ENCODE measurements at regions of chr3 and their contacts with region 1.

Region 1: DNA sequence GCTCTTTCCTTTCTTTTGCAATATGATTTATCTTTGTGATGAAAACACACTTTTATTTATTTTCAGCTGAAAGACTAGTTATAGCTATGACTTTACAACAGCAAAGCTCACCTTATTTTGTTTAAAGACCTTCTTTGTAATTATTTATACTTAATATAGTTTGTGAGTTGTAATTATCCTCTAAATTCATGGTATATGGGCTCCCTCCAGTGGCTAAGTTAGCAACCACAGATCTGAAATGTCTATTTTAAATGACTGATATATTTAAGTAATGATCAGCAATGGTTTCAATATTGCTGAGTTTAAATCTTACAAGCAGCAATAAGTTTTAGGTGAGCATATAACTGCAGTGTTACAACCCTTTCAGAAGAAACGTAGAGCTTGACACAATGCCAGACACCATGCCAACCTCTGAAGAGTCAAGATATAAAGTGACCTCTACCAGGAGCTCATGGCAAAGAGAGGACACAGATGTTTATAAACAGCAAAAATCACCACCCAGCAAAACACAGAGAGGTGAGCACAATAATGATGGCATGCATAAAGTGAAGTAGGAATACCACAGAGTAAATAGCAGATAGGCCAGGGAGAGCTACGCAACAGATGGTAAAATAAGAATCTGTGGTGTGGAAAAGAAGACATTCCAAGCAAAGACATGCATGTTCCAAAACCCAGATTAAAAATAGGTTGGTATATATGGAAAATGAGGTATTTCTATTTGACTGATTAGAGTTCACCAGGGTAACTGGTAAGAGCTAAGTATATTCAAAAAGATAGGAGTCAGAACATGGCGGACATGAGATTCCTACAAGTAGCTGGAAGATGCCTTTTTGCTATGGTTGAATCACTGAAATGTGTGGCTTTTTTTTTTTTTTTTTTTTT is 143.7 kb upstream of the ZNF385D start:
- DNase-seq: no peak
- ATAC-seq: no peak
- H3K4me3 ChIP-seq: no peak overlapping the region
- H3K27ac ChIP-seq: no peak overlapping the region
- H3K4me1 ChIP-seq: no peaks in the 10 kb centered on the region
- H3K27me3 ChIP-seq: no peaks in the 10 kb centered on the region
- CTCF ChIP-seq: peak; percentile 51; the same call in 1 of the 2 replicates

Region 2: DNA sequence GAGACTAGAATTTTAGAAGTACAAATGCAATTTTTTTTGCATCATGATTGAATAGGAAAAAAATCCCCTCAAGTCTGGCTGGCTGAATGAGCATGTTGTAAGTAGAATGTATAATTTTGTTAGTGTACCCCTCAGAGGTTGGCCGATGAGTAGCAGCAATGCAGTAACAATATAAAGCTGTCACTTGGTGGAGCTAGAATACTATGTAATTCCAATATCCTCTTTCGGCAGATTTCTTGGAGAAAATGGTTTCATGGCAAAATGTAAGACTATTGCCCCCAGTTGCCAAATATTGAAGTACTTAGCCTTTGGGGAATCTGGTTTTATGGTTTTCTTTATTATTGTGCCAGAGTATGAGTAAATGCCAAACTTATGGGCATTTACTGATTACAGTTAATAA is 1668.9 kb before region 1 on chr3:
- CTCF ChIA-PET with region 1: no interaction called
- POLR2A ChIA-PET with region 1: no interaction called
- in situ Hi-C with region 1: no loop called
- intact Hi-C with region 1: loop called (anchors 10 kb)
- DNase-seq: peak; percentile 1
- ATAC-seq: no peak; the same call in 1 of the 2 replicates
- H3K4me3 ChIP-seq: no peak overlapping the region
- H3K27ac ChIP-seq: no peak overlapping the region
- H3K4me1 ChIP-seq: no peaks in the 10 kb centered on the region
- H3K27me3 ChIP-seq: no peaks in the 10 kb centered on the region
- CTCF ChIP-seq: peak; percentile 50; the same call in 1 of the 2 replicates

Region 3: DNA sequence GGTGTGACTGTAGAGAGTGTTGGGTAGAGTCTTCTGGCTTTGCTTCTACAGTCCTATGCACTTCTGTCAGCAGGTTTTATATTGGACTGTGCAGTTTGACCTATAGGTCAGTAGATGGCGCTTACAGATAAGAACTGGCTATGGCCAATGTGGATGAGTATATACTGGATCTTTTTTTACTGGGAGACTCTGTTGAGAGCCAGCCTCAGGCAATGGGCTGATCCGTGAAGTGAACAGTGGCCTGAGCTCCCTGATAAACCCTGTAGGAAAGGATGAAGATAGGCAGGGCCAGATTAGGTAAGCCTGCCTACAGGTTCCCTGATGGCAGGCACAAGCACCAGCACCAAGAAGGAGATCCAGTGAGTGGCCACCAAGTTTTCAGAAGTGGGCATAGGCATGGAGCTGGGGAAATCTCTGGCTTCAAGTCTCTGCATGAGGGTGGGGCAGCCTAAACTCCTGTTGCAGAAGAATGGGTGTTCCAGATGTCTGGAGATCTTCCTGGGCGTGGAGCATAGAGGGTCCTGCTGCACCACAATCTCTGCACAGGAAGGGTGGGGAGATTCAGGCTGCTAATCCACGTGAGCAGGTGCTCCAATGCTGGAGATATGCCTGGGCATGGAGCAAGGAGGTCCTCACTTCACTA is 1382.7 kb before region 1 on chr3:
- CTCF ChIA-PET with region 1: no interaction called
- POLR2A ChIA-PET with region 1: no interaction called
- in situ Hi-C with region 1: no loop called
- intact Hi-C with region 1: loop called (anchors 5 kb)
- DNase-seq: peak; percentile 25
- ATAC-seq: peak; percentile 82
- H3K4me3 ChIP-seq: no peak overlapping the region
- H3K27ac ChIP-seq: no peak overlapping the region
- H3K4me1 ChIP-seq: no peaks in the 10 kb centered on the region
- H3K27me3 ChIP-seq: no peaks in the 10 kb centered on the region
- CTCF ChIP-seq: peak; percentile 63

Region 4: DNA sequence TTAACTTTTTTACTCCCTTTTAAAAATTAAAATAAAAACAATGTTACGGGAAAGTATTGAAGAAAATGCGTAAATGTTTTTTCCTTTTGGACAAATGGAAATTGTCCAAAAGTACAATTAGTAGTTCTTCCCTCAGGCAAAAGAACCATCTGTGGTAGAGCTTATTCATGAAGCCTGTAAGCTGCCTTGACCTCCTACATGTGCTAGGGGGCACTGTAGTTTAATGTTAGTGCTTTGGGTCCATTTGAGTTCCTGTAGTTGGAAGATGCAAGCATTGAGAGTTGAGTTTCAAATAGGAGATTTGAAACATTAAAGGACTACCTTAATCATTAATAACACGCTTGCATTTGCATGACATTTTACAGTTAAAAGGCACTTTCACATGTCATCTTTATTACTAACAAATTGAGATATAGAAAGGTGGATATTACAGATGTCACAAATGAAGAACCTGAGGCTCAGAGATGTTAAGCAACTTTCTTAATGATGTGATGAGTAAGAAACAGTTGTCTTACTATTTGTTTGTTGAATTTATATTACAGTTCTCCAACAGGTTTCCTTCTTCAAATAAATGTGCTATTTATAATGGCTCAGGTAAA is 141.9 kb before region 1 on chr3:
- CTCF ChIA-PET with region 1: interaction called, 4 read pairs
- POLR2A ChIA-PET with region 1: no interaction called
- in situ Hi-C with region 1: no loop called
- intact Hi-C with region 1: loop called (anchors 2 kb)
- DNase-seq: no peak
- ATAC-seq: no peak
- H3K4me3 ChIP-seq: no peak overlapping the region
- H3K27ac ChIP-seq: no peak overlapping the region
- H3K4me1 ChIP-seq: no peaks in the 10 kb centered on the region
- H3K27me3 ChIP-seq: no peaks in the 10 kb centered on the region
- CTCF ChIP-seq: peak; percentile 38; the same call in 1 of the 2 replicates

Region 5: DNA sequence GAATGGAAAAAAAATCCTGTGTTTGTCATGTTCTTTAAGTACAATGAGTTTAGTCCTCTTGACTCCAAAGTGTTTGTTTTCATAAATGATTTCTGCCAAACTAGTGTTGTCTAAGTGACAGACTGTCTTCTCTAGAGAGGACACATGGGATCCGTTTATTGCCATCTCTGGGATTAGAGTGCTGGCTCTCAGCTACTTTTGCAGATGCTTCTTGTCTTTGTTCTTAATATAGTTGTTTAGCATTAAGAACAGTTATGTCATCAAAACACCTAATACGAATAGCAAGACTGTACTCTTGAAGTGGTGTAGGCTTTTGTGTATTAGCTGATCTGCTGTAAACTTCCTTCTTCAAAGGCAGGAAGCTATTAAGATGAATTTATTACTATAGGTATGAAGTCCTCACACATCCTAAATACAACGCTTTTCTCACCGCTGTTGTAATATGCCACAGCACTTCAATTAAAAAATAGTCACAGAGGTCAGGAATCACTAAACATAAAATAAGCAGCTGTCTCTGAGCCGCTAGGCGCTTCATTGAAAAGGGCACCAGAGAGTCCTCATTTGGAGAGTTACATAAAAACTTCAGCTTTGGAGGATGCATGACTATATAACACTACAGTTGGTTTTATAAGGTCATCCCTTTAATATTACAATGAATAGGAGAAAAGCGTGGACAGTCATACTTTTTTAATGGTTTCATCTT is 15.4 kb before region 1 on chr3:
- CTCF ChIA-PET with region 1: no interaction called
- POLR2A ChIA-PET with region 1: no interaction called
- in situ Hi-C with region 1: no loop called
- intact Hi-C with region 1: no loop called
- DNase-seq: no peak
- ATAC-seq: no peak
- H3K4me3 ChIP-seq: no peak overlapping the region
- H3K27ac ChIP-seq: no peak overlapping the region
- H3K4me1 ChIP-seq: no peaks in the 10 kb centered on the region
- H3K27me3 ChIP-seq: no peaks in the 10 kb centered on the region
- CTCF ChIP-seq: no peak

Measured in Panc1 (cell line).